Left ventricle myocardium inferior (tissue), 1 donor: ENCODE measurements at regions of chr17 and their contacts with region 1.

Region 1: DNA sequence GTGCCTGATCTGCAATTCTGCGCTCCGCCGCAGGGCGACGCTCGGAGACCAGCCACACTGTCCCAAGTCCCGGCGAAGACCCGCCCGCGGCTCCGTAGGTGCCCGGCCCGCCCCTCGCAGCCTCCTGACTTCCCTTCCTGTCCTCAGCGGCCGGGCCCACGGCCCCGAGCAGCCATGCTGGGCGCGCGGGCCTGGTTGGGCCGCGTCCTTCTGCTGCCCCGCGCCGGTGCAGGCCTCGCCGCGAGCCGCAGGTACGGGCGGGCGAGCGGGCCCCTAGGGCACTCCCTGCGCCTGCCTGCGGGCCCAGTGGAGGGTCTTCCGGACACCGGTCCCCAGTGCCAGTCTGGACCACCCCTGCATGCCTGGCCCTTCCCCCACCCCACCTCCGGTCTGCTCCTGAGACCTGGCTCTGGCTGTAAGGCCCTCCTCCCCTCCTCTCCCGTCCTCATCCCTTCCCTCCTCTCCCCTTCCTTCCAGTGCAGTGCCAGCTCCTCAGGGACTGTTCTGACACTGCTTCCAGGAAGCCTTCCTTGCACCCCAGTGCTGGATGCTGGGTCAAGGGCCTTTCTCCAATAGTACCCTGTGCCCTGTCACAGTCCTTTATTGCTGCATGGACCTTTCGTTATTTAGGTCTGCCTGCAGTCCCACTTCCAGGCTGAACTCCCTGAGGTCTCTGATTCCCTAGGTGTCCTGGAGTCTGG is at the start of gene SPATA20:
- DNase-seq: peak; percentile 92
- H3K4me3 ChIP-seq: peak within 1 kb of the TSS; percentile 74
- H3K27ac ChIP-seq: peak within 1 kb of the TSS; percentile 88
- H3K4me1 ChIP-seq: peaks cover 39% of the 10 kb centered on the region
- H3K27me3 ChIP-seq: no peaks in the 10 kb centered on the region
- CTCF ChIP-seq: peak; percentile 99
- total RNA-seq, gene SPATA20: 66.3 TPM

Region 2: DNA sequence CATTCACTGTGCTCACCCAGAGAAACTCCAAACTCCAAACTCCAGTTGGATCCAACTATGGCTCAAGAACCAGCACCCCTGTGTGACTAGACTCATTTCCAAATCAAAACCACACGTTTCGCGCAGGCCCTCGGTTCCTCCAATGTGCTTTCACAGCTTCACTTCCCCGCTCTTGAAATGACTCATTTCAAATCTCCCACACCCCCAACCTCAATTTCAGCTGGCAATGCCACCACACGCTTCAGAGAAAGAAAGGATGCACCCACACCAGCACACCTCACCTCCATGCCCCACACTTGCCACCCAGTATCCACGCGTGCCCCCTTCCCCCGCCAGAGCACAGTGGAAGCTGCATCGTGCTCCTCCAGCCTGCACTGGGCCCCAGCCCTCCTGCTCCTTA is 263.9 kb before region 1 on chr17:
- intact Hi-C with region 1: no loop called
- DNase-seq: no peak
- H3K4me3 ChIP-seq: no peak overlapping the region
- H3K27ac ChIP-seq: no peak overlapping the region
- H3K4me1 ChIP-seq: no peaks in the 10 kb centered on the region
- H3K27me3 ChIP-seq: peaks cover 47% of the 10 kb centered on the region
- CTCF ChIP-seq: no peak

Region 3: DNA sequence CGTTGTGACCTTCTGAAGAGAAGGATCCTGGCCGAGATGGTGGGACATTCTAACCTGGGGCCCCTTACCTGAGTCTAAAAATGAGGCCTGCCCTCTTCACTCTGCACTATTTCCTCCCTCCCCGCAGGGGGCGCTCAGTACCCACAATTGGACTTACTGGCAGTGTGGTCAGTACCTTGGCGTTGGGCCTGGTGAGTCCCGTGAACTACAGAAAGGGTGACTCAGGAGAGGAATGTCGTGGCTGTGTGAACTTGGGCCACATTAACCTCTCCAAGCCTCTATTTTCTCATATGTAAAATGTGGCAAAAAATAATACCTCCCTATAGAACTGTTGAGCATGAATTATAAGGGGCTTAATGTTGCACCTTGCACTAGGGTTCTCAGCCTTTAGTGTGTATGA is 64.7 kb before region 1 on chr17:
- intact Hi-C with region 1: loop called (anchors 10 kb)
- DNase-seq: peak; percentile 93
- H3K4me3 ChIP-seq: peak overlapping the region; percentile 23
- H3K27ac ChIP-seq: peak overlapping the region; percentile 87
- H3K4me1 ChIP-seq: peaks cover 55% of the 10 kb centered on the region
- H3K27me3 ChIP-seq: no peaks in the 10 kb centered on the region
- CTCF ChIP-seq: peak; percentile 86

Region 4: GRCh38 chr17:50626037-50626574 is 78.9 kb after region 1 on chr17:
- intact Hi-C with region 1: loop called (anchors 5 kb)
- DNase-seq: peak; percentile 74
- H3K4me3 ChIP-seq: no peak overlapping the region
- H3K27ac ChIP-seq: no peak overlapping the region
- H3K4me1 ChIP-seq: peaks cover 7% of the 10 kb centered on the region
- H3K27me3 ChIP-seq: peaks cover 88% of the 10 kb centered on the region
- CTCF ChIP-seq: peak; percentile 85

Region 5: GRCh38 chr17:50689956-50690886 is 143.0 kb after region 1 on chr17:
- intact Hi-C with region 1: loop called (anchors 10 kb)
- DNase-seq: no peak
- H3K4me3 ChIP-seq: no peak overlapping the region
- H3K27ac ChIP-seq: no peak overlapping the region
- H3K4me1 ChIP-seq: peaks cover 36% of the 10 kb centered on the region
- H3K27me3 ChIP-seq: no peaks in the 10 kb centered on the region
- CTCF ChIP-seq: no peak

Region 6: GRCh38 chr17:50841949-50842354 is 294.8 kb after region 1 on chr17:
- intact Hi-C with region 1: loop called (anchors 10 kb)
- DNase-seq: peak; percentile 61
- H3K4me3 ChIP-seq: no peak overlapping the region
- H3K27ac ChIP-seq: no peak overlapping the region
- H3K4me1 ChIP-seq: peaks cover 22% of the 10 kb centered on the region
- H3K27me3 ChIP-seq: no peaks in the 10 kb centered on the region
- CTCF ChIP-seq: peak; percentile 85